Heart right ventricle (tissue), 16 donors: ENCODE measurements at regions of chr17 and their contacts with region 1.

Region 1: DNA sequence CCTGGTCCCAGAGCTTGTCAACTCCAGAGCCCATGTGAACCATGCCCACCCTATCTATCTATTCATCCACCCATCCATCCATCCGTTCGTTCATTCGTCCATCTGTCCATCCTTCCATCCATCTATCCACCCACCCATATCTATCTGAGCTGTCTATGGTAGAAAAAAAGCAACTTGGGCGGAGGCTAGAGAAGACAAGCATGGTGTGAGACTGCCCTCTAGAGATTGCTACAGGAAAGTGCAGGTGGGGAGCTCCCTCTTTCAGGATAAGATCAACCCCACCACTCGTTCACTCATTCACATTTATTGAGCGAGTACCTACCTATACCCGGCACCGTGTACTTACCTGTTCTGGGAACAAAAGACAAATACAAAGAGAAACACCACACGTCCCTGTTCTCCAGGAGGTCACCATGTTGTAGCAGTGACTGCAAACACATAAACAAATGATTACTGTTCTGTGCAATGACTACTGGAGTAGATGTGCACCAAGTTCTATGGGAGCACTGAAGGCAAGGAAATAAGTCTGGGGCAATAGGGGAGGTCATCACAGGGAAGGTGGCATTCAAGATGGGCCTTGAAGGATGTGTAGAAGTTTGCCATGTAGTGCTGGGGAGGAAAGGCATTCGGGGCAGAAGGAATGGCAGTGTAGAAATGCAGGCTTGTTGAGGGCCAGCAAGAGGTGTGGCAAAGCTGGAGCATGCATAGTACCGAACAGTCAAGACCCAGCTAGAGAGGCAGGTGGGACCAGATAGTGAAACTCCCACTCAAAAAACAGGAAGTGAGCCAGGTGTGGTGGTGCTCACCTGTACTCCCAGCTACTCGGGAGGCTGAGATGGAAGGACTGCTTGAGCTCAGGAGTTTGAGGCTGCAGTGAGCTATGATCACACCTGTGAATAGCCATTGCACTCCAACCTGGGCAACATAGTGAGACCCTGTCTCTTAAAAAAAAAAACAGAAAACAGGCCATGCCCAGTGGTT is 13.4 kb upstream of the ATP5MC1 start:
- DNase-seq: peak in 1 of 2 donors; percentile 55
- ATAC-seq: peak; percentile 76 to 88 (median 86)
- H3K4me3 ChIP-seq: no peak overlapping the region
- H3K27ac ChIP-seq: no peak overlapping the region
- H3K4me1 ChIP-seq: peaks cover 0 to 14% (median 0%) of the 10 kb centered on the region in 9 donors
- H3K27me3 ChIP-seq: peaks cover 0 to 4% (median 0%) of the 10 kb centered on the region in 7 donors
- CTCF ChIP-seq: peak; percentile 90 to 96 (median 95)

Region 2: GRCh38 chr17:48678141-48678971 is 200.9 kb before region 1 on chr17:
- intact Hi-C with region 1: loop called in 9 of 10 experiments (anchors 2 to 10 kb)
- DNase-seq: peak; percentile 31 to 69
- ATAC-seq: peak; percentile 65 to 84 (median 74)
- H3K4me3 ChIP-seq: peak overlapping the region in 1 of 10 donors; percentile 5
- H3K27ac ChIP-seq: no peak overlapping the region
- H3K4me1 ChIP-seq: peaks cover 0 to 6% (median 4%) of the 10 kb centered on the region in 9 donors
- H3K27me3 ChIP-seq: peaks cover 4 to 97% (median 81%) of the 10 kb centered on the region in 7 donors
- CTCF ChIP-seq: peak; percentile 79 to 98 (median 91)

Region 3: DNA sequence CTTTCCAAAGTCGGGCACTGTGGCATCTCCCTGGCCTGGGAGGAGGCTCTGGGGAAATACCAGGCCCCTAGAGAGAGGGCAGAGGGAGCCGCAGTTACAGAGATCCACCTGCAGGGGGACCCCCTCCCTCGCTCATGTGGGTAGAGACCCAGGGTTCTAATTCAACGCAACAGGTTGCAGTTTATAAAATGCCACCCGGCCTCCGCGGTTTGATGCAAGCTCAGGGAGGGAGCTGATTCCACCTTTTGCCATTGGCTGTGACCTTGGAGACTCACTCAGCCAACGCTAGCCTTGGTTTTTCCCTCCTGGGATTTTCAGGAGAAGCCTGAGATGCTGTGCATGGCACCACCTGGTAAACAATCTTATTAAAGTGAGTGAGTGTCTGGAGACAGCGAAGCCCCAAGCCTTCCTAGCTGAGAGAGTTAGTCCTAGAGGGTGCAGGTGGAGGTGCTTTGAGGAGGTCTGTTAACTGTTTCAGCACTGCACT is 74.2 kb before region 1 on chr17:
- intact Hi-C with region 1: loop called in 9 of 10 experiments (anchors 1 to 5 kb)
- DNase-seq: peak; percentile 41 to 62
- ATAC-seq: peak in 7 of 8 donors; percentile 43 to 88 (median 84)
- H3K4me3 ChIP-seq: no peak overlapping the region
- H3K27ac ChIP-seq: no peak overlapping the region
- H3K4me1 ChIP-seq: peaks cover 0 to 25% (median 7%) of the 10 kb centered on the region in 9 donors
- H3K27me3 ChIP-seq: peaks cover 0 to 20% (median 8%) of the 10 kb centered on the region in 7 donors
- CTCF ChIP-seq: peak; percentile 84 to 94 (median 91)

Region 4: GRCh38 chr17:48841395-48841831 is 37.8 kb before region 1 on chr17:
- intact Hi-C with region 1: loop called in 1 of 10 experiments (anchors 5 kb)
- DNase-seq: peak in 1 of 2 donors; percentile 54
- ATAC-seq: peak; percentile 36 to 87 (median 82)
- H3K4me3 ChIP-seq: peak overlapping the region in 9 of 10 donors; percentile 18 to 52 (median 40)
- H3K27ac ChIP-seq: peak overlapping the region; percentile 83 to 96 (median 87)
- H3K4me1 ChIP-seq: peaks cover 20 to 83% (median 74%) of the 10 kb centered on the region in 9 donors
- H3K27me3 ChIP-seq: no peaks in the 10 kb centered on the region
- CTCF ChIP-seq: no peak

Region 5: DNA sequence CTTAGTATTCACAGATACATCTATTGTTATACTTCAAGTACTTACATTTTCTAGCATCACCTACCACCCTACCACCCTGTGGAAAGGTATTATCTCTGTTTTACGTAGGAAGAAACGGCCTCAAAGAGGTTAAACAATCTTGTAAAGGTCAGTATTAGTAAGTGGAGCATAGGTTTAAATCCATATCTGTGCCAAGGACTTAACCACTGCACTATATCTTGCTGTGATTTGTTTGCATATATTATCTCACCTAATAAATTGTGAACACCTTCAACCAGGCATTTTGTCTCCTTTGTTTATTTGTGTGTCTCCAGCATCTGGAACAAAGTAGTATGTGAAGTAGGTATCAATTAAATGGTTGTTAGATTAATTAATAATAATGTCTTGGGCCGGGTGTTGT is 145.3 kb after region 1 on chr17:
- intact Hi-C with region 1: no loop called
- DNase-seq: no peak
- ATAC-seq: no peak
- H3K4me3 ChIP-seq: no peak overlapping the region
- H3K27ac ChIP-seq: no peak overlapping the region
- H3K4me1 ChIP-seq: peaks cover 0 to 3% (median 0%) of the 10 kb centered on the region in 9 donors
- H3K27me3 ChIP-seq: peaks cover 0 to 46% (median 41%) of the 10 kb centered on the region in 7 donors
- CTCF ChIP-seq: no peak